Activated CD4-positive, alpha-beta memory T cell treated with anti-CD3 and anti-CD28 coated beads for 36 hours (primary cell): ENCODE measurements at regions of chr3 and their contacts with region 1.

Region 1: GRCh38 chr3:27712136-27713077 is 9.7 kb downstream of the EOMES start:
- DNase-seq: peak; percentile 85
- H3K4me3 Mint-ChIP-seq: peak overlapping the region; percentile 84
- H3K27ac Mint-ChIP-seq: no peak overlapping the region
- H3K4me1 Mint-ChIP-seq: peaks cover 19% of the 10 kb centered on the region
- H3K27me3 Mint-ChIP-seq: peaks cover 40% of the 10 kb centered on the region

Region 2: DNA sequence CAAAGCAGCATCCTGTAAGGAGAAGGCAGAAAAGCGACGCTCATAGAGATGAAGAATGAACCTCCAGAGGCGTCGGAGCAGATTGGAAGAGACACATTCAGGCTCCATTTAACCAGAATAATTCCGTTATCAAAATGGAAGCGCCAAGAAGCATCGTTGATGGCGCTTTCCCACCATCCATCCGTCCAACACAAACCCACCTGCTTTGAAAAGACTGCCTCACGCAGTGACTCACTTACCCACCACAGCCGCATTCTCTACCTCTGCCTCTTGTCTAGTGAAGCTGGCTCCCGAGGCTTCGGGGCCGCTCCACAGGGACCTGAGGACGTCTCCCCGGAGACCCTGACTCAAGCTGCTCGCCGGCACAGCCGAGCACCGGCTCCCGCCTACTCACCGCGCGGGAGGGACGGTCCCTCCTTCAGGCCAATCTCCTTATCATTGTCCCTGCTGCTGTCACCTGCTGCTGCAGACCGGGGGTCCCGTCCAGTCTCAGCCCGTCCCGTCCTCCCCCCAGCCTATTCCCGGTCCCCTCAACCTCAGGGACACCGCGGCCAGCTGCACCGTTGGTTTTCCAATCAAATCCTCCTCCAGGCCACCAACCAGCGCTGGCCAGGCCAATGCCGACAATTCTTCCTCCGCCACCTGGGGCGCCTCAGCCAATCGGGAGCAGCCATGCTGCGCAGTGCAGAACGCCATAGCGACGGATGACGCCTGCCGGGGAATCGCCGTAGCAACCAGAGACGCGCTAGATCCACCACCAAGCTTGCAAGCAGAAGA is 343.4 kb before region 1 on chr3 and contains the start of gene NEK10:
- CTCF ChIA-PET with region 1: no interaction called
- POLR2A ChIA-PET with region 1: no interaction called
- intact Hi-C with region 1: no loop called
- DNase-seq: peak; percentile 94
- H3K4me3 Mint-ChIP-seq: peak within 1 kb of the TSS; percentile 88
- H3K27ac Mint-ChIP-seq: peak within 1 kb of the TSS; percentile 66
- H3K4me1 Mint-ChIP-seq: peaks cover 9% of the 10 kb centered on the region
- H3K27me3 Mint-ChIP-seq: no peaks in the 10 kb centered on the region
- total RNA-seq, gene NEK10: 0.36 to 0.48 TPM

Region 3: DNA sequence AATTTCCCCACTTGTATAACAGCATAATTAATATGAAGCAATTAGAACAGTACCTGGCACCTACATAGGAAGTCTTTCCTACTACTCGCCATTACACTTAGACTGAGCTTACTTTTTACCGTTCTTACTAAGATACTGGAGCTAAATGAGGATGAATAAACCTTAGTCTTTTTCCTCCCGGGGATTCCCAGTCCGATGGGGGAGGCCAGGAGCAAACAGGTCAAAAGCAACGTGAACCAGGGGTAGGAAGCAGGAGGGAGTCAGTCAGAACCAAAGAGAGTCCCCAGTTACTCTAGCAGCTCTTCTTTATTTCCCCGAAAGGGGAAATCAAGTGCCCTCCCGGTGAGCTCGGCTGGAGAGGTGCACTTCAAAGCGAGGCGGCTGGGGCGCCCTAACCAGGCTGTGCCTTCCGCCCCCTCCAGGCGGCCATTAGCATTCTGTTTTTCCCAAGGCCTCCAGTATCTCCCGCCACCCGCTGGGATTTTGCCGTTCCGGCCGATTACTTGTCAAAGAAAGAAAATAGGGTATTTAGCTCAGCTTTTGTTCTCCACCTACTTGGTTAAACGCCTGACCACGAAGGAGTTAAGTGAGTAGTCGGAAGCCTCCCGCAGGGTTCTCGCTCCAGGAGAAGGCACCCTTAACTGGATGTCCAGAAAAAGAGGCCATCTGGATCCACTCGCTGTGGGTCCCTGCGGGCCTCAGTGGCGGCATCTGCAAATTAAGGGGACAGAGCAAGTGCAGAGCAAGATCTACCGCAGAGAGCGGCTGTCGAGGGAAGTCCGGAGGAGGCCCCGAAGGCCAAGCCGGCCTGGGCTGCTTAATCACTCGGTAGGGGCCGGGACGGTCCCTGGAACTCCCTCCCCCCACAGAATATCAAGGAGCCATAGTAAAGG is 16.0 kb after region 1 on chr3:
- CTCF ChIA-PET with region 1: interaction called, 54 read pairs
- POLR2A ChIA-PET with region 1: no interaction called
- intact Hi-C with region 1: loop called (anchors 2 kb)
- DNase-seq: peak; percentile 49
- H3K4me3 Mint-ChIP-seq: peak overlapping the region; percentile 56
- H3K27ac Mint-ChIP-seq: no peak overlapping the region
- H3K4me1 Mint-ChIP-seq: peaks cover 43% of the 10 kb centered on the region
- H3K27me3 Mint-ChIP-seq: peaks cover 77% of the 10 kb centered on the region

Region 4: DNA sequence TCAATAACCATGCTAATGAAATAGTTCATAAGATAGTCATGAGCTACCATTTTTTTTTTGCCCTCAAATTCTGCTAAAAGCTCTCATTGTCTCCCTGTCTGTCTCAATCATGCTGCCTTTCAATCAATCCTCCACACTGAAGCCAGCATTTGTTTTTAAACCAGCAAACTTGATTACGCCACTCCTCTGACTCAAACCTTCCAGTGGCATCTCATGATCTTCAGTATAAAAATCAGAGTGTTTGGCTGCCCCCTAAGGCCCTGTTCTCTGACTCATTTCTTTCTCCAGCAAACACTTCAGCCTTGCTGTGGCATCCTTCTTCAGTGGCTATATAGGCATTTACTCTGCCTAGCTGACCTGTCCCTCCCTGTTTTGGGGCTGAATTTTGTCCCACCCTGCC is 45.7 kb after region 1 on chr3:
- CTCF ChIA-PET with region 1: no interaction called
- POLR2A ChIA-PET with region 1: no interaction called
- intact Hi-C with region 1: no loop called
- DNase-seq: peak; percentile 43
- H3K4me3 Mint-ChIP-seq: no peak overlapping the region
- H3K27ac Mint-ChIP-seq: no peak overlapping the region
- H3K4me1 Mint-ChIP-seq: peaks cover 1% of the 10 kb centered on the region
- H3K27me3 Mint-ChIP-seq: no peaks in the 10 kb centered on the region

Region 5: DNA sequence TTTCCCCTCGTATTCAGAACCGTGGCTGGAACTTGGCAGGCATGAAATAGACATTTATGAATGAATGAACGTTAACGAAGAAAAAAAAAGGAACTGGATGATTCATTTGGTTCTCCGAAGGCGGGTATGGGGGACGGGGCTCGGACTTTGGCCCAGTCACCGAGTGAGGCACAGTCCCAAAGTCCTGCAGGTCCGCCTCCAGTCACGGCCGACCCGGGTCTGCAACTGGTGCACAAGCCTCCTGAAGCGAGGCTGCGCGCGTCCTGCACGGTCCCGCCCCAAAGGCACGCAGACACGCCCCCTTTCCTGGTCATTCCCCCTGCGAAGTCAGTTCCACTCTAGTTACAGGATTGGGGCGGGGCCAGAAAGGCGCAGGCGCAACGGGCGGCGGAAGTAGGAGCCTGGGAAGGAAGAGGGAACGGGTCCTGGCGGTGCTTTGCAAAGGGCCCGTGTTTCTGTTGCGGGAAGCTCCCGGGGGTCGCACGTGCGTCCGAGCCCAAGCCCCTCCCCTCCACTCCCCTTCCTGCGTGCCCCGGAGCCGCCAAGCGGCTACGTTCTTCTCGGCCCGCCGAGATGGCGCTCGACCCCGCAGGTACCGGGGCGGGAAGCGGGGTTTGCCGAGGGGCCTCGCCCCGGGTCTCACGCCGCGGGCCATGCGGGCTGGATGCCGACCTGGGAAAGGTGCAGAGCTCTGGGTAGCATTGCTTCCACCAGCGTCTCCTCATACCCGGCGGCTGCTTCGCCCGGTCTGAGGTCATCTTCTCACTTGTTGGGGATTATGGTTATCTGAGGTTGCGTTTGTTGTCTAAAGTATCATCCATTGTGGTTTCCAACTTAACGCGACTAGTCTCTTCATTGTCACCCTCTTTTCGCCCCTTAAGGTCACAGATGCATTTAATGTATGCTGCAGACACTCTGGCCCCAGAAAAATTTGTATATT is 529.1 kb after region 1 on chr3 and contains the start of gene CMC1:
- CTCF ChIA-PET with region 1: interaction called, 3 read pairs
- POLR2A ChIA-PET with region 1: no interaction called
- intact Hi-C with region 1: loop called (anchors 5 kb)
- DNase-seq: peak; percentile 96
- H3K4me3 Mint-ChIP-seq: peak within 1 kb of the TSS; percentile 93
- H3K27ac Mint-ChIP-seq: peak within 1 kb of the TSS; percentile 94
- H3K4me1 Mint-ChIP-seq: peaks cover 38% of the 10 kb centered on the region
- H3K27me3 Mint-ChIP-seq: no peaks in the 10 kb centered on the region
- total RNA-seq, gene CMC1: 27.5 to 28.6 TPM

Region 6: GRCh38 chr3:28317438-28318022 is 605.1 kb after region 1 on chr3:
- CTCF ChIA-PET with region 1: interaction called, 17 read pairs
- POLR2A ChIA-PET with region 1: no interaction called
- intact Hi-C with region 1: no loop called
- DNase-seq: no peak
- H3K4me3 Mint-ChIP-seq: no peak overlapping the region
- H3K27ac Mint-ChIP-seq: no peak overlapping the region
- H3K4me1 Mint-ChIP-seq: peaks cover 6% of the 10 kb centered on the region
- H3K27me3 Mint-ChIP-seq: no peaks in the 10 kb centered on the region

Region 7: DNA sequence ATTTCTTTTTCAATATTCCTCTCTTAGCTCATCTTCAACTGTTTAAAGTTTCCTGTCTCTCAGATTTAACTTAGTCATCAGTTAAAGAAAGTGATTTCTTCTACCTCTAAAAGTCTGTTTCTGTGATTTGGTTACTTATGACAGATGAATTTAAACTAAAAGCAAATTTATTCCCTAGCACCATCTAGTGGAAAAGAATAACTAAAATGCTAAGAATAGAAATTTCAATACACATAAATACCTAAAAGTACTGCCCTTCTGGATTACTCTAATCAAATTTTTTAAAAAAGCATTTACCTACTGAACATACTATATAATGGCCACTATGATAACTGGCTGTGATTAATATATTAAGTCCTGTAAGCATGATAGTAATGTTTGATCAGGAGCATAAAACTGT is 622.1 kb after region 1 on chr3:
- CTCF ChIA-PET with region 1: interaction called, 89 read pairs
- POLR2A ChIA-PET with region 1: no interaction called
- intact Hi-C with region 1: no loop called
- DNase-seq: no peak
- H3K4me3 Mint-ChIP-seq: no peak overlapping the region
- H3K27ac Mint-ChIP-seq: no peak overlapping the region
- H3K4me1 Mint-ChIP-seq: peaks cover 5% of the 10 kb centered on the region
- H3K27me3 Mint-ChIP-seq: no peaks in the 10 kb centered on the region